AG04450 (cell line): ENCODE measurements at regions of chr6 and their contacts with region 1.

Region 1: DNA sequence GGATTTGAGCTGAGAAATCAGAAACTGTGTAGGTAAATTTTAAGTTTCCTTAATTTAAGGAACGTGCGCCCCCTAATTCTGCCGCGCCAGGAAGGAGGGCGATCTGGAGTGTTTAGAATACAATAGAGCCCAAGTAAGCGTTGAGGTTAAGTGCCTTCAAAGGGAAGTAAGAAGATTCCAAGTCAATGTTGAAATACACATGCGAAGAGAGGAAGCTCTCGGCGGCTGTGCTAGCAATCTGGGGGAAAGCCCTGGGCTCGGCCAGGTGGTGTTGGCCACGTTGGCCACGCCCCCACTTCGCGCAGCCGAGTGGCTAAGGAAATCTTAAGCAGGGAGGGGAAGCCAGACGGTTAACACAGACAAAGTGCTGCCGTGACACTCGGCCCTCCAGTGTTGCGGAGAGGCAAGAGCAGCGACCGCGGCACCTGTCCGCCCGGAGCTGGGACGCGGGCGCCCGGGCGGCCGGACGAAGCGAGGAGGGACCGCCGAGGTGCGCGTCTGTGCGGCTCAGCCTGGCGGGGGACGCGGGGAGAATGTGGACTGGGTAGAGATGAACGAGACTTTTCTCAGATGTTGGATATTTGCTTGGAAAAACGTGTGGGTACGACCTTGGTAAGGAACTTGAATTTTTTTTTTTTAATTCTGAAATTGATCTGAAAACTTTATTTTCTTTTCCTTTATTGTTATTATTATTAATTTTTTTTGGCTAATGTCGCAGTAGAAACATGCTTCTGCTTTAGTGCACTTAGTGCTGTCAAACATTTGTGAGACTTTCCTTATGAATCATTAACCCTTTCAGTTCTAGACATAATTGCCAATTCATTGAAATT is at the start of gene PRDM1:
- DNase-seq: no peak
- H3K4me3 ChIP-seq: peak within 1 kb of the TSS; percentile 74
- H3K27ac ChIP-seq: peak within 1 kb of the TSS; percentile 77
- H3K27me3 ChIP-seq: no peaks in the 10 kb centered on the region
- CTCF ChIP-seq: peak; percentile 17; the same call in 1 of the 2 replicates
- polyA plus RNA-seq, gene PRDM1: 3.4 and 3.7 TPM in 2 replicates

Region 2: GRCh38 chr6:105484238-105485161 is 601.7 kb before region 1 on chr6:
- CTCF ChIA-PET with region 1: interaction called, 16 read pairs
- POLR2A ChIA-PET with region 1: interaction called, 4 read pairs
- DNase-seq: no peak
- H3K4me3 ChIP-seq: no peak overlapping the region
- H3K27ac ChIP-seq: no peak overlapping the region
- H3K27me3 ChIP-seq: no peaks in the 10 kb centered on the region
- CTCF ChIP-seq: peak; percentile 94

Region 3: DNA sequence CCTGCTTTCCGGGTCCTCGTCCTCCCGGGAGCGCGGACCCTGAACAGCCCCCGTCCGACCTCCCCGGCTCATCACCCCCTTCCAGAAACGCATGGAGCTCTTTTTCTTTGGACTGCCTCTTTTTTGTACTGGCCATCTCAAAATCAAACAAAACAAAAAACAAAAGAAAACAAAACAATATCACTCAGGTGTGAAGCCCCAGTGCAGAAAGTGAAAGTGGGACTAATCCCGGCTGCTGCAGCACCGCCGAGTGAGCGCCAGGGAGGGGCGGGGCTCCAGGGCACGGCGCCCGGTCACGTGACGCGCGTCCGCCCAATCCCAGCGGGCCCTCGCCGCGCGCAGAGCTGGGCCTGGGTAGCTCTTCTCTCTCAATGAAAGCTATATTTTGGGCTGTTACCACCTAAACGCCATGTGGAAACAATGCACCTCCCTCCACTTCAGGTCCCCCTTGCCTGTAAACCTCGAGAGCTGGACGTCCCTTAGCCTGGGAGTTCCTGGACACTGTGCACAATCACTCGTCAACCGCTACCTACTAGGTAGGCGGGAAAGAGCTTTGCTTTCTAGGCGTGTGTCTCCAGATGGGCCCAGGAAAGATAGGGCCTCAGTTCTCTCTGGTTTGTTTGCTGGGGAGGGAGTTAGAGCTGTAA is 93.8 kb before region 1 on chr6:
- CTCF ChIA-PET with region 1: no interaction called
- POLR2A ChIA-PET with region 1: interaction called, 18 read pairs
- DNase-seq: no peak
- H3K4me3 ChIP-seq: peak overlapping the region; percentile 75
- H3K27ac ChIP-seq: no peak overlapping the region
- H3K27me3 ChIP-seq: no peaks in the 10 kb centered on the region
- CTCF ChIP-seq: no peak

Region 4: GRCh38 chr6:106056746-106057390 is 29.3 kb before region 1 on chr6:
- CTCF ChIA-PET with region 1: no interaction called
- POLR2A ChIA-PET with region 1: no interaction called
- DNase-seq: no peak
- H3K4me3 ChIP-seq: no peak overlapping the region
- H3K27ac ChIP-seq: no peak overlapping the region
- H3K27me3 ChIP-seq: no peaks in the 10 kb centered on the region
- CTCF ChIP-seq: no peak

Region 5: GRCh38 chr6:106069478-106069877 is 16.7 kb before region 1 on chr6:
- CTCF ChIA-PET with region 1: no interaction called
- POLR2A ChIA-PET with region 1: no interaction called
- DNase-seq: peak; percentile 76
- H3K4me3 ChIP-seq: no peak overlapping the region
- H3K27ac ChIP-seq: no peak overlapping the region
- H3K27me3 ChIP-seq: no peaks in the 10 kb centered on the region
- CTCF ChIP-seq: no peak